Esophagus squamous epithelium (tissue), 5 donors: ENCODE measurements at regions of chr14 and their contacts with region 1.

Region 1: GRCh38 chr14:102096214-102097114 is 9.6 kb upstream of the HSP90AA1 start:
- DNase-seq: no peak
- H3K4me3 ChIP-seq: peak overlapping the region in 1 of 4 donors; percentile 20
- H3K27ac ChIP-seq: no peak overlapping the region
- H3K4me1 ChIP-seq: peaks cover 0 to 22% (median 5%) of the 10 kb centered on the region in 3 donors
- H3K27me3 ChIP-seq: no peaks in the 10 kb centered on the region
- CTCF ChIP-seq: peak; percentile 51 to 84 (median 82)
- POLR2A ChIP-seq: no peak

Region 2: GRCh38 chr14:101964297-101965144 is 131.9 kb before region 1 on chr14 and contains the start of gene DYNC1H1:
- intact Hi-C with region 1: loop called (anchors 5 kb)
- DNase-seq: peak; percentile 66
- H3K4me3 ChIP-seq: peak within 1 kb of the TSS; percentile 77 to 100 (median 96)
- H3K27ac ChIP-seq: peak within 1 kb of the TSS; percentile 95 to 97 (median 96)
- H3K4me1 ChIP-seq: peaks cover 8 to 67% (median 33%) of the 10 kb centered on the region in 3 donors
- H3K27me3 ChIP-seq: no peaks in the 10 kb centered on the region
- CTCF ChIP-seq: no peak
- POLR2A ChIP-seq: peak in 3 of 4 donors; percentile 95 to 98 (median 98)
- total RNA-seq, gene DYNC1H1: 261 to 376 (median 317) TPM

Region 3: GRCh38 chr14:102008891-102009290 is 87.6 kb before region 1 on chr14:
- intact Hi-C with region 1: no loop called
- DNase-seq: no peak
- H3K4me3 ChIP-seq: no peak overlapping the region
- H3K27ac ChIP-seq: no peak overlapping the region
- H3K4me1 ChIP-seq: no peaks in the 10 kb centered on the region
- H3K27me3 ChIP-seq: no peaks in the 10 kb centered on the region
- CTCF ChIP-seq: no peak
- POLR2A ChIP-seq: no peak

Region 4: DNA sequence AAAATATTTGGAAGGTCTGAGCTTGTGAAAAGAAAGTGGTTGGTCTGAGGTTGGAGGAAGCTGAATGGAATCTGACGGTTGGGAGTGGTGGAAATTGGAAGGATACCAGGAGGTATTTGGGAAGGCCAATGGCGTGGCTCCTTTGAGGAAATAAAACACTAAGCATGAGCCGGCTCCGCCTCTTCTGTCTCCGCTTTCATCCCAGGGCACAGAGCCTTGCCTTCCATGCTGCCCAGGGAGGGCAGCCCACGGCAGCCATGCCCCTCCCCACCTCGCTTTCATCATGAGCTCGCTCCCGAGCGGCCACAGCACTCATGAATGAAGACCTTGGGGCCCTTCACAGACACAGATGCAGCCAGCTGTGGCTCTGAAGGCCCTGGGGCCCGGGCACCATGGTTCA is 45.8 kb before region 1 on chr14:
- intact Hi-C with region 1: loop called (anchors 5 kb)
- DNase-seq: no peak
- H3K4me3 ChIP-seq: no peak overlapping the region
- H3K27ac ChIP-seq: no peak overlapping the region
- H3K4me1 ChIP-seq: peaks cover 3 to 37% (median 4%) of the 10 kb centered on the region in 3 donors
- H3K27me3 ChIP-seq: no peaks in the 10 kb centered on the region
- CTCF ChIP-seq: no peak
- POLR2A ChIP-seq: no peak